HepG2 (cell line): ENCODE measurements at regions of chr7 and their contacts with region 1.

Region 1: DNA sequence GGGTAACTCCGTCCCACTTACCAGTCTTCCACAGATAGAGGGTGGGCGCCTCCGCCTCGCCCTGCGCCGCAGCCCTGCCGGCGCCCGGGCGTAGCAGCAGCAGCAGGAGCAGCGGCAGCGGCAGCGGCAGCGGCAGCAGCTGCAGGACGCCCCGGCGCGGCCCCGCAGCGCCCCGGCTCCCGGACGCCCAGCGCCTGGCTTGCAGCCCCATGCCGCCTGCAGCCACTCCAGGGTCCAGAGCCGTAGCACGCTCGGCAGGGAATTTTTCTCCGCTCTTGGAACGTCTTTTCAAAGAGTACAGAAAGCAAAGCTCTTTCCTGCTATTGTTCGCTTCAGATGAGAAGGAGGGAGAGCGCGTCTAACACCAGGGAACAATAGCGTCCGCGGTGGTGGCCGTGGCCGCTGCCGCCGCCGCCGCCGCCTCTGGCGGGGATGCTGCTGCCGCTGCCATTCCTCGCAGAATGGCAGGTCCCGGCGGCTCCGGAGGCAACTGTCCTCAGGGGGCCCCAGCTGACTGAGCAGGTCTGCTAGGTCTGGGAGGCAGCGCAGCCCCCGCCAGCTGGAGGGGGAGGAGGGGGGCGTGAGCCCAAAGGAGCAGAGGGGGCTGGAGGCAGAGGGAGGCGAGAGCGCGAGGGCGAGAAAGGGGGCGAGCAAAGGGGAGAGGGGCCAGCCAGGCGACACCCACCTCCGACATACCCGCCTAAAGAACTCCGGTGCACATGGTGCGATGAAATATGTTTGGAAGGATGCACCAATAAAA is at the start of gene THSD7A:
- DNase-seq: peak; percentile 7
- ATAC-seq: peak; percentile 100
- H3K4me3 ChIP-seq: peak within 1 kb of the TSS; percentile 6 to 62 (median 26); a peak in 5 of 6 replicates
- H3K27ac ChIP-seq: no peak within 1 kb of the TSS
- H3K4me1 ChIP-seq: 0 out of 2 replicates have a peak, but pooled peaks cover 6% of the 10 kb centered on the region
- H3K27me3 ChIP-seq: peaks cover 0 to 13% of the 10 kb centered on the region in 2 experiments; a peak in 2 of 5 replicates
- CTCF ChIP-seq: no peak
- EP300 ChIP-seq: no peak
- POLR2A ChIP-seq: no peak
- RAD21 ChIP-seq: no peak; the same call in 1 of the 2 replicates
- total RNA-seq, gene THSD7A: 0.07 TPM in 1 of 2 replicates, not detected in the other

Region 2: DNA sequence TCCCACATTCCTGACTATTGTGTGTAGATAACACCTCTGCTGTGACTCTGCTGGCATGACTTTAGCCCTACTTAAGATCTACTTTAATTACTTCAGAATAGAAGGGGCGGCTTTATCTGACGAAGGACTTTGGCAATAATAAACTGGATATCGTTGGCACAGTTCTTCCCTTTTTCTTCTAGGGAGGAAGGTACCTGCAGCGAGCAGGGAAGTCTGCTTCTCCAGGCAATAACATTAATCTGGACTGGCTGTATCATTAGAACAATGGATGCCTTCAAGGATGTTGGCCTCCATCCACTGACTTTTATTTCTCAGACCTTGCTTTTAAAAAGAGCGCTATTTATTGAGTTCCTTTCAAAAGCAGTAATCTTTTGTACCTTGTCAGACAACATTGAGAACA is 172.7 kb after region 1 on chr7:
- CTCF ChIA-PET with region 1: no interaction called
- POLR2A ChIA-PET with region 1: no interaction called
- in situ Hi-C with region 1: no loop called
- intact Hi-C with region 1: no loop called
- DNase-seq: no peak
- ATAC-seq: no peak
- H3K4me3 ChIP-seq: no peak overlapping the region
- H3K27ac ChIP-seq: no peak overlapping the region
- H3K4me1 ChIP-seq: no peaks in the 10 kb centered on the region
- H3K27me3 ChIP-seq: no peaks in the 10 kb centered on the region
- CTCF ChIP-seq: no peak
- EP300 ChIP-seq: no peak
- POLR2A ChIP-seq: no peak
- RAD21 ChIP-seq: no peak

Region 3: GRCh38 chr7:12322284-12322902 is 490.5 kb after region 1 on chr7:
- CTCF ChIA-PET with region 1: no interaction called
- POLR2A ChIA-PET with region 1: no interaction called
- in situ Hi-C with region 1: no loop called
- intact Hi-C with region 1: loop called (anchors 5 kb)
- DNase-seq: peak; percentile 3
- ATAC-seq: no peak
- H3K4me3 ChIP-seq: no peak overlapping the region
- H3K27ac ChIP-seq: no peak overlapping the region
- H3K4me1 ChIP-seq: no peaks in the 10 kb centered on the region
- H3K27me3 ChIP-seq: no peaks in the 10 kb centered on the region
- CTCF ChIP-seq: peak; percentile 57
- EP300 ChIP-seq: no peak
- POLR2A ChIP-seq: no peak
- RAD21 ChIP-seq: no peak

Region 4: GRCh38 chr7:12469568-12469967 is 637.7 kb after region 1 on chr7:
- CTCF ChIA-PET with region 1: no interaction called
- POLR2A ChIA-PET with region 1: no interaction called
- in situ Hi-C with region 1: no loop called
- intact Hi-C with region 1: no loop called
- DNase-seq: no peak
- ATAC-seq: no peak
- H3K4me3 ChIP-seq: no peak overlapping the region
- H3K27ac ChIP-seq: no peak overlapping the region
- H3K4me1 ChIP-seq: no peaks in the 10 kb centered on the region
- H3K27me3 ChIP-seq: no peaks in the 10 kb centered on the region
- CTCF ChIP-seq: no peak
- EP300 ChIP-seq: no peak
- POLR2A ChIP-seq: no peak
- RAD21 ChIP-seq: no peak